ENCODE measurements at regions of chr20 and their contacts with region 1.

Region 1: DNA sequence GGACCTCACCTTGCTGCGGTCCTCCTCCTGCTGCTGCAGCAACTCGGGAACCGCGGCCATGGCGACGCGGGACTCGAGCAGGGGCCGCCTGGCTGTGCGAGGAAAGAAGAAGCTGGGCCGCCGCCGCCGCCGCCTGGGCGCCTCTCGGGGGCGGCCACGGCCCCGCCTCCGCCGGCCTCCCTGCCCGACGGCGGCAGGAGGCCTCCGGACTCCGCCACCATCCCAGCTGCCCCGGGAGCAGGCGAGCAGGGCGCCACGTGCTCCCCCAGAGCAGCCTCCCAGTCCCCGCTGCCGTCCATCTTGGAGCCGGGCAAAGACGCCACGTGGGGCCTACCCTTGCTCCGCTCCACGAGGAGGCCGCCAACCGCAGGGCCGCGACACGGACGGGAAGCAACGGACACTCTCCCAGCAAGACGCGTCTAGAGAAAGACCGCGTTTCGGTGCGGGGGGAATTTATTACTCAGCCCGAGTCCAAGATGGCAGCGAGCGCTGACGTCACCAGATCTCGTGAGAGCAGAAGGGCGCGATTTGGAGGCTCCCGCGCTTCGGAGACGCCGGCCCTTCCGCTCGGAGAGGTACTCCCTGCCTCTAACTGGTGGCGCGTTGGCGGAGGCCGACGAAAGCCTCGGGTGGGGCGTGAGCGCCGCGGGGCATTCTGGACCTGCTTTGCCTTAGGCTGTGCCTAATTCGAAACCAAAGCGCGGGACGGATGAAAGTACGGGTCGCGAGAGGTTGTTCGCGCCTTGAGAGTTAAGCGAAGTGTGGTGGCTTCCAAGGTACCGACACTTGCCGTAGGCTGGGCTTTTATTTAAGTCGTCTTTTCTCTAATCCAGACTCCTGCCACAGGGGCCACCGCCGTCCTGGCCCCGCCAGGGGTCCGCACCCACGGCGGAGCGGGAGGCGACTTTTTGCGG is at the starts of genes MGME1 and SNX5:
- DNase-seq: peak; percentile 100
- H3K4me3 Mint-ChIP-seq: peak within 1 kb of the TSS; percentile 96
- H3K27ac Mint-ChIP-seq: peak within 1 kb of the TSS; percentile 99
- H3K4me1 Mint-ChIP-seq: peaks cover 43% of the 10 kb centered on the region
- H3K27me3 Mint-ChIP-seq: no peaks in the 10 kb centered on the region
- total RNA-seq, gene MGME1: 31.0 to 34.7 TPM
- total RNA-seq, gene SNX5: 234 to 256 TPM

Region 2: DNA sequence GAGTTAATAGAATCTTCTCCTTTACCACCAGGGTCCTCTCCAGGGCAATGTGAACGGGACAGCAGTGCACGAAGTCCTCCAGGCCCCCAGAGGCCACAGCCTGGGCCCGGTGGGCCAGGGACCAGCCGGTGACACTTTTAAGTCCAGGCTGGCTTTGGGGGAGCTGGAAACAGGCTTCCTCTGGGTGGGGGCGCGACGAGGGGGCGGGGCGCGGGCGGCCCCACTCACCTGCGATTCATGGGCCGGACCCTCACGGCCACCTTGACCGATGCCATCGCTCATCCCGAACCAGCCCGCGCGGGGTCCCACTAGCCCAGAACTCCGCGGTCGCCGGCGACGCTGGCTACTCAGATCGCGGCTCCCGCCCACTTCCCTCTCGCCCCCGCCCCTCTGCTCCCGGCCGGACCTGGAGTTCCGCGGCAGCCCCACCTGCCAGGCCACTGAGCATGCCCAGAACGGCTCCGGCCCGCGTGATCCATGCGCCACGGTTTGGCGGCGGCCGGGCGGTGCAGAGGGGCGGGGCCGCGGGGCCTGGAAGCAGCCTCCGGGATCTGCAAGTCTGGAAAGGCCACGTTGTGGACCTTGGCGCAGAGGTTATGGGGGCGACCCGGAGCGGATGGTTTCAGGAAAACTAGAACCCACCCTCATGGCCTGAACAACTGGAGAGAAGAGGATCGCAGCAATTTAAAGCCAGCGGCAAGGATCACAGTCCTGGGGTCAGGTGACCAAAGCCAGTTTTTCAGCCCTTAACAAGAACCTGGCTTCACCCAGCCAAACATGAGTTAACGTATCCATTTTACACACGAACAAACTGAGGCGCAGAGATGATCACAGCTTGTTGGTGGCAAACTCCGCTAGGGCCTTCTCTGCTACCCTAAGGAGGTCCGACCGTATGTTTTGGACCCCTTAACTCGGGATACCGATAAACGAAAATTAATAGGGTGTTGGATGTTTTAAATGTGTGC is 1395.3 kb before region 1 on chr20 and contains the start of gene KIF16B:
- CTCF ChIA-PET with region 1: no interaction called
- POLR2A ChIA-PET with region 1: no interaction called
- intact Hi-C with region 1: loop called (anchors 10 kb)
- DNase-seq: peak; percentile 92
- H3K4me3 Mint-ChIP-seq: peak within 1 kb of the TSS; percentile 87
- H3K27ac Mint-ChIP-seq: peak within 1 kb of the TSS; percentile 75
- H3K4me1 Mint-ChIP-seq: peaks cover 45% of the 10 kb centered on the region
- H3K27me3 Mint-ChIP-seq: no peaks in the 10 kb centered on the region
- total RNA-seq, gene KIF16B: 7.7 to 7.9 TPM

Region 3: DNA sequence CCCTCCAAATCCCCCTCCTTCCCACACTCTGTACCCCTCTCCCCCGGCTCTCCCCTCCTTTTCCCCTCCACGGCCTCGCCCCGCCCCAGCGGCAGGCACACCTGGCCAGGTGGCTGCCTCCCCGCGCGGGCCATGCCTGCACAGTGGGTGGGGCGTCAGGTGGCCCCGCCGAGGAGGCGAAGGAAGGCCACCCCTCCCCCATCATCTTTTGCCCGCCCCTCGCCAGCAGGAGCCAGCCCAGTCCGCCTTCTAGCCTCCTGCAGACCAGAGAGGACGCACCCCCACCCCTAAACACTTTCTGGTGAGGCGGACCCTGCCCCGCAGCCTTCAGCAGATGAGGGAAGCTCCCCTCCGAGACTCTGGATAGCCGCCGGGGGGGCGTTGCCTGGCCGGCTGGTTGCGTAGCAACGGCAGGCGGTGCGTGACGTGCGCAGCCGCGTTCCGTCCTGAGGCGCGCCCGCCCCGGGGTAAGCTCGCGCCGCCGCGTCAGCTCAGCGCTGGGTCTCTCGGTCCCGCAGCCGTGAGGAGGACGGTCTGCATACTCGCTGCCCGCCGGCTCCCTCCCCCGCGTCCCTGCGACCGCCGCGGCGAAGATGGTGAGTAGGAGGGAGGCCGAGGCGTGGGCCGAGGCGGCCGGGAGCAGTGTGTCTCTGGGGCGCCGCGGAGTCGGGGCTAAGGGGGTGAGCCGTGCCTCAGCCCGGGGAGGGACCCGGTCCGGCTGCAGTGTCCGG is 398.8 kb before region 1 on chr20 and contains the start of gene DSTN:
- CTCF ChIA-PET with region 1: interaction called, 3 read pairs
- POLR2A ChIA-PET with region 1: interaction called, 20 read pairs
- intact Hi-C with region 1: loop called (anchors 2 kb)
- DNase-seq: peak; percentile 90
- H3K4me3 Mint-ChIP-seq: peak within 1 kb of the TSS; percentile 90
- H3K27ac Mint-ChIP-seq: peak within 1 kb of the TSS; percentile 79
- H3K4me1 Mint-ChIP-seq: peaks cover 27% of the 10 kb centered on the region
- H3K27me3 Mint-ChIP-seq: no peaks in the 10 kb centered on the region
- total RNA-seq, gene DSTN: 91.2 to 94.3 TPM

Region 4: GRCh38 chr20:17995967-17996819 is 27.6 kb after region 1 on chr20:
- CTCF ChIA-PET with region 1: interaction called, 31 read pairs
- POLR2A ChIA-PET with region 1: interaction called, 7 read pairs
- intact Hi-C with region 1: loop called (anchors 1 kb)
- DNase-seq: peak; percentile 55
- H3K4me3 Mint-ChIP-seq: no peak overlapping the region
- H3K27ac Mint-ChIP-seq: no peak overlapping the region
- H3K4me1 Mint-ChIP-seq: peaks cover 28% of the 10 kb centered on the region
- H3K27me3 Mint-ChIP-seq: peaks cover 3% of the 10 kb centered on the region

Region 5: GRCh38 chr20:18466894-18467730 is 498.5 kb after region 1 on chr20 and contains the starts of genes DZANK1 and POLR3F:
- CTCF ChIA-PET with region 1: no interaction called
- POLR2A ChIA-PET with region 1: no interaction called
- intact Hi-C with region 1: loop called (anchors 2 kb)
- DNase-seq: peak; percentile 96
- H3K4me3 Mint-ChIP-seq: peak within 1 kb of the TSS; percentile 95
- H3K27ac Mint-ChIP-seq: peak within 1 kb of the TSS; percentile 87
- H3K4me1 Mint-ChIP-seq: peaks cover 23% of the 10 kb centered on the region
- H3K27me3 Mint-ChIP-seq: no peaks in the 10 kb centered on the region
- total RNA-seq, gene DZANK1: 1.4 to 1.6 TPM
- total RNA-seq, gene POLR3F: 11.0 to 11.3 TPM

Region 6: DNA sequence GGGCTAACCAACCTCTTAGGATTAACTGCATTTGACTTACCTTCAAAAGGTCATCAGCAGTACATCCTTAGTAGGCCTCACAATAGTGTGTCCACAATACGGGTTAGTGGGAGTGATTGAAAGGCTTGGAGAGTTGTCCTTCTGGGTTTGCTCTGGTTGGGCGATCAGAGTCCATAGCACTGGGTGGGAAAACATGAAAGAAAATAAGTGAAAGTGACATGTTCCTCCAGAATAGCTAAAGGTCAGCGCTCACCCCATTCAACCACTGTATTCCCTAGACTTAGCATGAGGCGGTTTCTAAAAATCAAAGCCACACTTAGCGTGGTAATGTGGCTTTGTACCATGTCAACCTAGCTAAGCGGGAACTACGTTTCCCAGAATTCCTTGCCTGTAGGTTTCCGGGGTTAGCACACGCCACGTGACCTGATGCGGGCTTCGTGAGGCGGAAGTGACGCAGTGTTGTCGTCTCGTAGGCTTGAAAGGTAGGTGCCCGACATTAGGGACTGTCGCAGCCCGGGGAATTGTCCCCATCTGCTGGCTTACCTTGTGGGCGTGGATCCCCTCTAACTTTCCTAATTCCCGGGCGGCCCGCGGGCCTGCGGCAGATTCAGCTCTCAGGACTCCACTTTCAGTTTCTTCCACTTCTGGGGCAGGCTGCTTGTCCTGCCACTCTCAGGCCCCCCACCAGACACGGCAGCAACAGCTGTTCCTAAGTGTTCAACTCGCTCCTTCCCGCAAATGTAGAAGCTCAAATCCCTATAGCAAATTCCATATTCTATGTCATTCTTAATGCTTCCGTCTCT is 825.2 kb after region 1 on chr20:
- CTCF ChIA-PET with region 1: no interaction called
- POLR2A ChIA-PET with region 1: no interaction called
- intact Hi-C with region 1: loop called (anchors 10 kb)
- DNase-seq: peak; percentile 91
- H3K4me3 Mint-ChIP-seq: peak overlapping the region; percentile 90
- H3K27ac Mint-ChIP-seq: peak overlapping the region; percentile 86
- H3K4me1 Mint-ChIP-seq: peaks cover 12% of the 10 kb centered on the region
- H3K27me3 Mint-ChIP-seq: peaks cover 7% of the 10 kb centered on the region